H1 (cell line): ENCODE measurements at regions of chr2 and their contacts with region 1.

Region 1: GRCh38 chr2:27095745-27096651 is 9.4 kb downstream of the KHK start:
- DNase-seq: peak in 1 of 2 experiments; percentile 81
- H3K4me3 ChIP-seq: peak overlapping the region; percentile 14 to 53 (median 40); a peak in 5 of 8 replicates
- H3K27ac ChIP-seq: no peak overlapping the region
- H3K4me1 ChIP-seq: peaks cover 0 to 2% (median under 1%) of the 10 kb centered on the region in 4 experiments; a peak in 2 of 7 replicates
- H3K27me3 ChIP-seq: no peaks in the 10 kb centered on the region
- CTCF ChIP-seq: no peak
- EP300 ChIP-seq: no peak
- POLR2A ChIP-seq: no peak
- RAD21 ChIP-seq: no peak

Region 2: DNA sequence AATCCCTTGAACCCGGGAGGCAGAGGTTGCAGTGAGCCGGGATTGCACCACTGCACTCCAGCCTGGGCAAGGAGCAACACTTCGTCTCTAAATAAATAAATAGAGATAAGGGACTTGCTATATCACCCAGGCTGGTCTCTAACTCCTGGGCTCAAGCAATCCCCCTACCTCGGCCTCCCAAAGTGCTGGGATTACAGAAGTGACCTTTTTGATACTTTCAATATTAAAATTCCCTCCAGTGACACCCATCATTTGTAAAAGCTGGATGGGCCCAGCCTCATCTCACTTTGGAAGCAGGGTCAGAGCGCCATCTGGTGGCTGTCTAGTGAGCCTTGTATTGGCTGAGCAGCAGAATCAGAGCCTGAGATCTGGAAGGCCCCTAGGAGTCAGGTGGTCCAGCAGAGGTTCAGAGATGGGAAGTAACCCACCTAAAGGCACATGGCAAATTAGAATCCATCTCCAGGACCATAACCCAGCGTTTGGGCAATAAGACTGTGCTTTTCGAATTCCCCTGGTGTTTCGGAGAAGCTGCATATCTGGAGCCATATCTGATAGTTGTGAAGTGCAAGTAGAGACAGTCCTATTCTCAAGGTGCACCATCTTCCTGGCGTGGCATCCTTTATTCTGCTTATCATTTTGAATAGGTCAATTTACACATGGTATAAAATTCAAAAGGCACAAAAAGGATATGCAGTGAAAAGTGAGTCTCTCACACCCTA is 350.2 kb before region 1 on chr2:
- CTCF ChIA-PET with region 1: no interaction called
- POLR2A ChIA-PET with region 1: no interaction called
- DNase-seq: peak in 1 of 2 experiments; percentile 90
- H3K4me3 ChIP-seq: no peak overlapping the region
- H3K27ac ChIP-seq: no peak overlapping the region
- H3K4me1 ChIP-seq: peaks cover 0 to under 1% (median under 1%) of the 10 kb centered on the region in 4 experiments; a peak in 4 of 7 replicates
- H3K27me3 ChIP-seq: peaks cover 0 to 5% (median 0%) of the 10 kb centered on the region in 4 experiments; a peak in 3 of 7 replicates
- CTCF ChIP-seq: peak; percentile 76 to 95 (median 91)
- EP300 ChIP-seq: no peak
- POLR2A ChIP-seq: no peak
- RAD21 ChIP-seq: peak; percentile 97 to 98

Region 3: DNA sequence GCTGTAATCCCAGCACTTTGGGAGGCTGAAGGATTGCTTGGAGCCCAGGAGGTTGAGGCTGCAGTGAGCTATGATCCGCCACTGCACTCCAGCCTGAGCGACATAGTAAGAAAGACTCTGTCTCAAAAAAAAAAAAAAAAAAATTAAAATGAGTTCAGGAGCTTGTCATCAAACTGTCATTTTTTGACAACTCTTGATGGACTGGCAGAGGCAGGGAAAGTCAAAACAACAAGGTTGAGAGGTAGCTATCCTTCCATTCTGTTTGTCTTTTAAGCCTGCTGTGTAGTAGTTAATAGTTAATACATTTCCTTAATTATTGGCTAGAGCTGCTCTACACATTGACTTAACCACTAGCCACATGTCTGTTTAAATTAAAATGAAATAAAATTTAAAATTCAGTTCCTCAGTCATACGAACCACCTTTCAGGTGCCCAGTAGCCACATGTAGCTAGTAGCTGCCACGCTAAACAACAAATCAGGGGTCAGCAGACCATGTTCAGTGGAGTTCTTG is 225.4 kb before region 1 on chr2:
- CTCF ChIA-PET with region 1: no interaction called
- POLR2A ChIA-PET with region 1: no interaction called
- DNase-seq: peak in 1 of 2 experiments; percentile 4
- H3K4me3 ChIP-seq: no peak overlapping the region
- H3K27ac ChIP-seq: no peak overlapping the region
- H3K4me1 ChIP-seq: peaks cover 0 to 3% (median 0%) of the 10 kb centered on the region in 4 experiments; a peak in 1 of 7 replicates
- H3K27me3 ChIP-seq: peaks cover 0 to 8% (median 3%) of the 10 kb centered on the region in 4 experiments; a peak in 3 of 7 replicates
- CTCF ChIP-seq: no peak
- EP300 ChIP-seq: no peak
- POLR2A ChIP-seq: no peak
- RAD21 ChIP-seq: no peak

Region 4: DNA sequence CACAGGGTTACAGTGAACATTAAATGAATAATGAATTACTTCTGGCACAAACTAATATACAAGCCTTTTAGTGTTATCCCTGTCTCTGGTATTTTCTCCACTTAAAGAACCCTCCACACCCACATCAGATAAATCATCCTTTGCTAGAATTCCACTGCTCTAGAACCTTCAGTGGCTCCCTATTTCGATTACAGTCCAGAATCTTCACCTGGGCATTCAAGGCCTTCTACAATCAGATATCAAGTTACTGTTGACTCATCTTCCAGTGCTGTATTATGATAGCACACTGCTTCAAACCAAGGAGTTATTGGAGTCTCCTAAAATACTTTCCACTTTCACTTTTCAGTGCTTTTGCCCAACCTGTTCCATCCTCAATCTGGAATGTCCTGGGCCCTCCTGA is 19.5 kb after region 1 on chr2:
- CTCF ChIA-PET with region 1: interaction called, 120 read pairs
- POLR2A ChIA-PET with region 1: interaction called, 3 read pairs
- DNase-seq: no peak
- H3K4me3 ChIP-seq: no peak overlapping the region
- H3K27ac ChIP-seq: no peak overlapping the region
- H3K4me1 ChIP-seq: peaks cover 0 to 10% (median 6%) of the 10 kb centered on the region in 4 experiments; a peak in 5 of 7 replicates
- H3K27me3 ChIP-seq: peaks cover 6 to 32% (median 25%) of the 10 kb centered on the region in 4 experiments; a peak in 6 of 7 replicates
- CTCF ChIP-seq: no peak
- EP300 ChIP-seq: no peak
- POLR2A ChIP-seq: no peak
- RAD21 ChIP-seq: no peak

Region 5: GRCh38 chr2:27133905-27134780 is 38.1 kb after region 1 on chr2 and contains the start of gene PREB:
- CTCF ChIA-PET with region 1: interaction called, 30 read pairs
- POLR2A ChIA-PET with region 1: interaction called, 10 read pairs
- DNase-seq: peak; percentile 92 to 100
- H3K4me3 ChIP-seq: peak within 1 kb of the TSS; percentile 68 to 91 (median 88)
- H3K27ac ChIP-seq: peak within 1 kb of the TSS; percentile 25; the same call in 1 of the 2 replicates
- H3K4me1 ChIP-seq: peaks cover 0 to 4% (median 3%) of the 10 kb centered on the region in 4 experiments; a peak in 5 of 7 replicates
- H3K27me3 ChIP-seq: no peaks in the 10 kb centered on the region
- CTCF ChIP-seq: peak in 2 of 3 experiments; percentile 46 to 60; a peak in 2 of 4 replicates
- EP300 ChIP-seq: no peak
- POLR2A ChIP-seq: no peak
- RAD21 ChIP-seq: peak; percentile 56 to 67
- total RNA-seq, gene PREB: 51.2 and 54.1 TPM in 2 replicates

Region 6: GRCh38 chr2:27191053-27191829 is 95.2 kb after region 1 on chr2:
- CTCF ChIA-PET with region 1: interaction called, 97 read pairs
- POLR2A ChIA-PET with region 1: interaction called, 6 read pairs
- DNase-seq: no peak
- H3K4me3 ChIP-seq: no peak overlapping the region
- H3K27ac ChIP-seq: no peak overlapping the region
- H3K4me1 ChIP-seq: no peaks in the 10 kb centered on the region
- H3K27me3 ChIP-seq: no peaks in the 10 kb centered on the region
- CTCF ChIP-seq: peak in 2 of 3 experiments; percentile 75 to 81; a peak in 3 of 4 replicates
- EP300 ChIP-seq: no peak
- POLR2A ChIP-seq: no peak
- RAD21 ChIP-seq: peak; percentile 82 to 87

Region 7: DNA sequence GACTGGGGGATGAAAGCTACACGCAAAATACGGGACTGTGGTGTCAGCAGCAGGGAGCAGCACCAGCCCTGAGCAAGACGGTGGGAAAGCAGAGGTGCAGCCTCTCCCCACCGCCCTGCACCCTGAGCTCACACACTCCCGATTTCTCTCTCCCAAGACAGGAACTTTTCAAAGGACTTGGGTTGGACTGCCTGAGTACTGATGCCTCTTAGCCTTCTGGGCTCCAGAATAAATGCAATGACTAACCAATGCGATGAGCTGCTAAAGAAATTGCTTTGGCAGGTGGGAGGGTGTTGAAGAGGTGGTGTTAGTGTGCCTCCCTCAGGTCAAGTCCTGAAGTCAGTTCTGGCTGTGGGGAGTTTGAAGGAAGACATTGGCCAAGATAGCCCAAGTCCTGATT is 195.9 kb after region 1 on chr2:
- CTCF ChIA-PET with region 1: interaction called, 10 read pairs
- POLR2A ChIA-PET with region 1: no interaction called
- DNase-seq: no peak
- H3K4me3 ChIP-seq: no peak overlapping the region
- H3K27ac ChIP-seq: no peak overlapping the region
- H3K4me1 ChIP-seq: peaks cover 0 to 4% (median 2%) of the 10 kb centered on the region in 4 experiments; a peak in 3 of 7 replicates
- H3K27me3 ChIP-seq: no peaks in the 10 kb centered on the region; a peak in 1 of 7 replicates
- CTCF ChIP-seq: peak; percentile 59 to 74 (median 70)
- EP300 ChIP-seq: no peak
- POLR2A ChIP-seq: no peak
- RAD21 ChIP-seq: peak; percentile 80 to 87